K562 (cell line): ENCODE measurements at regions of chr7 and their contacts with region 1.

Region 1: DNA sequence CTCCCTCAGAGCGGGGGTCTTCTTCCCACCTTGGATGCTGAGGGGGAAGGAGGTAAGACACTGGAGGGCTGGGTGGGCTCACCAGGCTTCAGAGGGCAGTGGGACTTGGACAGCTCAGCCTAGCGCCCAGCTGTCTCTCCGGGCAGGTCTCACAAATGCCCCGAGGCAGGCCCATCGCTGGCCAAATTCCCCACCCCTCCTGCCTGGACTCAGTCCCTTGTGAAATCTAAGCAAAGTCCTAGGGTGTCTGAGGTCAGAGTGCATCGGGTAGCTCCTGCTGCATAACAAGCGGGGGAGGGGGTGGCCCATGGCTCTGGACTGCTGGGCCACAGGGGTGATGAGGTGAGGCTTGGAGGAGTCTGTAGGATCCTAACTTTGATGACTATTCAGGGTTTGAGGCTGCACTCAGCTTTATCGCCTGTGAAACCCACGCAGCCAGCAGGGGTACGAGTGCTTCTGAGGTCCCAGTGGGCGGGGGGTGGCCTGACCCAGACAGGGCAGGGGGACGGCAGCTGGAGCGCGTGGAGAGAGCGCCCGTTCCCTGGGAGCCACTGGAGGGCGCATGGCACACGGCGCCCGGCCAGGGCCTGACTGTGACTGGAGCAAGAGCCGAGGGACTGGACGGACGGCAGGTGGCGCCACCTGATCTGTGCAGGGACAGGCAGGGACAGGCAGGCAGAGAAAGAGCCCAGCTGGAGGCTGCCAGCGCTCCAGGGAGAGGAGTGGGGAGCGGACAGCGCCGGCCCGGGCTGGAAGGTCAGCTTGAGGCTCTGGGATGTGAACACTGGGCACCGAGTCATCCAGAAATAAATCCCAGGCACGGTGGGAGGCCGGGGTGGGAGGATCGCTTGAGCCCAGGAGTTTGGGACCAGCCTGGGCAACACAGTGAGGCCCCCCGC is 10.0 kb downstream of the CYP2W1 start:
- DNase-seq: peak; percentile 87 to 96 (median 90)
- ATAC-seq: peak; percentile 97
- H3K4me3 ChIP-seq: no peak overlapping the region
- H3K27ac ChIP-seq: no peak overlapping the region
- H3K4me1 ChIP-seq: peaks cover 0 to 82% of the 10 kb centered on the region in 2 experiments; a peak in 2 of 5 replicates
- H3K27me3 ChIP-seq: no peaks in the 10 kb centered on the region
- CTCF ChIP-seq: peak; percentile 99 to 100 (median 99)
- EP300 ChIP-seq: peak; percentile 20; the same call in 1 of the 2 replicates
- POLR2A ChIP-seq: no peak; the same call in 1 of the 2 replicates
- RAD21 ChIP-seq: peak; percentile 100

Region 2: DNA sequence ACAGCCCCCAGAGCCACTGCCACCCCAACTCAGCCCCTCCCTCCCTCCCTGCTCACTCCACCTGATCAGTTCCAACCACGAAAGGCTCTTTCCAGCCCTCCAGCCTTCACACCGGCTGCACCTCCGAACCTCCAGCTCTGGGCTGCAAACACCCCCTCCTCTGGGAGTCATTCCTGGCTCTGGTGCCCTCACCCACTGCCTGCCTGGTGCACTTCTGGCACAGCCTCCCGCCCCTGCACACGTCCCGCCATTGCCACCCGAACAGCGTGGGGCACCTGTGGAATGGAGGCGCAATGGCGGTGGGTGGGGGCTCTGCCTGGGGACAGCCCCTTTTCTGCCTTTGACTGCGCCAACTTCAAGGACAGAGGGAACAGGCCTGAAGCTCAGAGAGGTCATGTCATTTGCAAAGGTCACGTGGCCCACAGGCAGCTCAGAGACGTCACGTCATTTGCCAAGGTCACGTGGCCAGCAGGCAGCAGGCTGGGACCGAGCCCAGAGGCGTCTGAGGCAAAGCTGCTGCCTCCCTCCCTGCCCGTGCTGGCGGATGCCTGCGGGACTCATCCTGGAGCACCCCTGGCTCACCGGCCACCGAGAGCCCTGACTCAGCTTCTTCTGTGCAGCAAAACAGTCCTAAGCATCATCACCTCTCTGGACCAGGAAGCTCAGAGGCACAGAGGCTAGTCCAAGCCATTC is 342.5 kb before region 1 on chr7:
- CTCF ChIA-PET with region 1: no interaction called
- POLR2A ChIA-PET with region 1: no interaction called
- in situ Hi-C with region 1: no loop called
- intact Hi-C with region 1: no loop called
- DNase-seq: no peak
- ATAC-seq: no peak
- H3K4me3 ChIP-seq: no peak overlapping the region
- H3K27ac ChIP-seq: no peak overlapping the region
- H3K4me1 ChIP-seq: peaks cover 0 to 5% of the 10 kb centered on the region in 2 experiments; a peak in 1 of 5 replicates
- H3K27me3 ChIP-seq: no peaks in the 10 kb centered on the region
- CTCF ChIP-seq: no peak
- EP300 ChIP-seq: no peak
- POLR2A ChIP-seq: no peak
- RAD21 ChIP-seq: no peak

Region 3: GRCh38 chr7:1028031-1028770 is 35.2 kb after region 1 on chr7:
- CTCF ChIA-PET with region 1: interaction called, 4 read pairs
- POLR2A ChIA-PET with region 1: interaction called, 4 read pairs
- in situ Hi-C with region 1: loop called (anchors 5 kb)
- intact Hi-C with region 1: no loop called
- DNase-seq: peak; percentile 94 to 98 (median 97)
- ATAC-seq: peak; percentile 94
- H3K4me3 ChIP-seq: peak overlapping the region; percentile 72
- H3K27ac ChIP-seq: peak overlapping the region; percentile 88
- H3K4me1 ChIP-seq: peaks cover 13 to 82% of the 10 kb centered on the region in 2 experiments
- H3K27me3 ChIP-seq: no peaks in the 10 kb centered on the region
- CTCF ChIP-seq: no peak
- EP300 ChIP-seq: no peak
- POLR2A ChIP-seq: no peak
- RAD21 ChIP-seq: no peak

Region 4: DNA sequence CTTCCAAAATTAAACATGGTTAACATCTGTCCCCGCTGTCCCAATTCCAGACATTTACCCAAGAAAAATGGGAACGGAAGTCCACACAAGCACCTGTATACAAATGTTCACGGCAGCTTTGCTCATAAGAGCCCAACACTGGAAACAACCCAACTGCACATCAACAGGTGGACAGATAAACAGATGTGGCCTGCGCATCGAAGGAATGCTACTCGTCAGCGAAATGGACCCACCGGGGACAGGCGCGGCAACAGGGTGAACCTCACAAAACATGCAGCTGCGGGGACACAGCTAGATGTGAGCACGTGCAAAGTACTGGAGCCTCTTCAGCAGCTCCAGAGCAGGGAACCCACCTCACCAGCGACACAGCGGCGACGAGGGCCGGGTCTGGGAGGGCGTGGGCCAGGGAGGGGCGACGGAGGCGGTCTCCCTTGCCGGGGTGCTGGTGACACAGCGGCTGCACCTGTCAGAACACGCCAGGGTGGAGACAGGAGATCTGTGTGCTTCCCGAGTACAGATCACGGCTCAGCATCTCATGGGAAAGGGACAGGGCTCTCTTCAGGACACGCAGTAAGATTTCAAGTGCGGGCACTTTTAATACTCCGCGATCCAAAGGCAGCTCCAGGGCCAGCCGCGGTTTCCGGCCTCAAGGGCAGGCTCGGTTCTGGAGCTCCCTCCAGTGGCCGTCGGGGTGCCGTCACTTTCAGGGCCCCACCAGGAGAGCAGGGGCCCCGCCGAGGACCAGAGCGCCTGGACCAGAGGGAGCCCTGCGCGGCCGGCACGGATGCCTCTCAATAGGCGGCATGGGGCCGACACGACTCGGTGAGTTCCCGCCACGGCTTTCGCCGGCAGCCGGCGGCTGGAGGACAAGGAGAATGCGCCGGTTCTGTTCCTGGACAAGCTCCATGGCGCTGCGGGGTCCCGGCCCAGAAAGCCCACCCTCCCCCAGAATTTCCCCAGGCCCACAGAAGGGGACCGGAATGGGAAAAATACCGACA is 72.6 kb after region 1 on chr7:
- CTCF ChIA-PET with region 1: interaction called, 111 read pairs
- POLR2A ChIA-PET with region 1: interaction called, 7 read pairs
- in situ Hi-C with region 1: loop called (anchors 5 kb)
- intact Hi-C with region 1: loop called (anchors 1 kb)
- DNase-seq: peak; percentile 87 to 93 (median 88)
- ATAC-seq: peak; percentile 100
- H3K4me3 ChIP-seq: no peak overlapping the region
- H3K27ac ChIP-seq: no peak overlapping the region
- H3K4me1 ChIP-seq: peaks cover 8 to 51% of the 10 kb centered on the region in 2 experiments; a peak in 4 of 5 replicates
- H3K27me3 ChIP-seq: no peaks in the 10 kb centered on the region; a peak in 1 of 5 replicates
- CTCF ChIP-seq: peak; percentile 87 to 98 (median 96)
- EP300 ChIP-seq: no peak
- POLR2A ChIP-seq: no peak
- RAD21 ChIP-seq: peak; percentile 99

Region 5: GRCh38 chr7:1169409-1170368 is 176.7 kb after region 1 on chr7:
- CTCF ChIA-PET with region 1: interaction called, 37 read pairs
- POLR2A ChIA-PET with region 1: no interaction called
- in situ Hi-C with region 1: loop called (anchors 25 kb)
- intact Hi-C with region 1: no loop called
- DNase-seq: peak; percentile 93 to 96 (median 94)
- ATAC-seq: peak; percentile 99
- H3K4me3 ChIP-seq: peak overlapping the region; percentile 68
- H3K27ac ChIP-seq: peak overlapping the region; percentile 82
- H3K4me1 ChIP-seq: peaks cover 3 to 16% of the 10 kb centered on the region in 2 experiments; a peak in 4 of 5 replicates
- H3K27me3 ChIP-seq: no peaks in the 10 kb centered on the region
- CTCF ChIP-seq: peak; percentile 94 to 97 (median 95)
- EP300 ChIP-seq: no peak
- POLR2A ChIP-seq: peak; percentile 84
- RAD21 ChIP-seq: peak; percentile 40 to 69

Region 6: DNA sequence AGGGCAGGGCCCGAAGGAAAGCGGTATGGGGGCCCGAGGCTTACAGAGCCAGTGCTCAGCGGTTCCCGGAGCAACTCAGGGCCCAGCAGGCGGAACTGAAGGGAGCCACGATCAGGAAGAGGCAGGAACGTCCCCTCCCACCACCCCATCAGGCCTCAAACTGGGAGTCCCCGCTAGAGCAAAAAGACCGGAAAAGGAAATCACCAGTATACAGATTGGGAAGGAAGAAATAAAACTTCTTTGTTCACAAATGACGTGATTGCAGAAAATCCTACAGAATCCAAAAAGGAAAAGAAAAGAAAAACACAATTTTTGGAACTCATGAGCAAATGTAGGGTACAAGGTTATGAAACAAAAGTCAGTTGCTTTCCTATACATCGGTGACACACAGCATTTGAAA is 188.7 kb after region 1 on chr7:
- CTCF ChIA-PET with region 1: interaction called, 37 read pairs
- POLR2A ChIA-PET with region 1: interaction called, 4 read pairs
- in situ Hi-C with region 1: no loop called
- intact Hi-C with region 1: loop called (anchors 1 kb)
- DNase-seq: no peak
- ATAC-seq: no peak
- H3K4me3 ChIP-seq: no peak overlapping the region
- H3K27ac ChIP-seq: no peak overlapping the region
- H3K4me1 ChIP-seq: peaks cover 2 to 16% of the 10 kb centered on the region in 2 experiments; a peak in 4 of 5 replicates
- H3K27me3 ChIP-seq: peaks cover 33 to 68% of the 10 kb centered on the region in 2 experiments; a peak in 4 of 5 replicates
- CTCF ChIP-seq: no peak
- EP300 ChIP-seq: no peak
- POLR2A ChIP-seq: no peak
- RAD21 ChIP-seq: no peak

Region 7: DNA sequence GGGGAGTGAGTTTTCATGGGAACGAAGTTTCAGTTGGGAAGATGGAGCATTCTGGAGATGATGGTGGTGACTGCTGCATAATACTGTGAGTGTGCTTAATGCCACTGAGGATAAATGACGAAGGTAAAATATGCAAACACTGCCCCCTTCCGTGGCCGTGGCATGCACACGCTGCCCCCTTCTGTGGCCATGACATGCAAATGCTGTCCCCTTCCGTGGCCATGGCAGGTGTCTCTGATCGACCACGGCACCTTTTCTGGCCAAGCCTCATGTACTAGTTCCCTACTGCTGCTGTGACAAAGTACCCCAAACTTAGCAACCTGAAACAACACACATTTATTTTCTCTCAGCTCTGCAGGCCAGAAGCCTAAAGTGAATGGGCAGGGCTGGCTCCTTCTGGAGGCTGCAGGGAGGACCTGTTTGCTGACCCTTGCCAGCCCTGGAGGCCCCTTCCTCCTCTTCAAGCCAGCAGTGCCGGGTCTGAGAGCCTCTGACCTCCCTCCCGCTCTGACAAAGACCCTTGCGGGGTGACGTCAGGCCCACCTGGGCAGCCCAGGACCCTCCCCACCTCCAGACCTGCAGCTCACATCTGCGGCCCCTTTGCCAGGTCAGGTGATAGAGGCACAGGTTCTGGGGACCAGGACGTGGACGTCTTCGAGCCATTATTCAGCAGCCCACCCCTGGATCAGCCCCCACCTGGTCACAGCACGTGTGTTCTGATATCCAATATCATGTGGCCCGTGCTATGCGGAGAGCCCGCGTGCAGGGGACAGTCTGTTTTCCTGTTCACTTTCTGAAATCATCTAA is 384.3 kb after region 1 on chr7:
- CTCF ChIA-PET with region 1: no interaction called
- POLR2A ChIA-PET with region 1: no interaction called
- in situ Hi-C with region 1: no loop called
- intact Hi-C with region 1: no loop called
- DNase-seq: peak in 1 of 4 experiments; percentile 21
- ATAC-seq: peak; percentile 48; the same call in 2 of the 3 replicates
- H3K4me3 ChIP-seq: no peak overlapping the region
- H3K27ac ChIP-seq: no peak overlapping the region
- H3K4me1 ChIP-seq: peaks cover 0 to 7% of the 10 kb centered on the region in 2 experiments; a peak in 2 of 5 replicates
- H3K27me3 ChIP-seq: peaks cover 12 to 30% of the 10 kb centered on the region in 2 experiments; a peak in 4 of 5 replicates
- CTCF ChIP-seq: peak; percentile 50 to 63 (median 51); a peak in 5 of 6 replicates
- EP300 ChIP-seq: no peak
- POLR2A ChIP-seq: no peak
- RAD21 ChIP-seq: peak in 1 of 2 experiments; percentile 45; a peak in 1 of 4 replicates